ENCODE measurements at regions of chr4 and their contacts with region 1.

Region 1: DNA sequence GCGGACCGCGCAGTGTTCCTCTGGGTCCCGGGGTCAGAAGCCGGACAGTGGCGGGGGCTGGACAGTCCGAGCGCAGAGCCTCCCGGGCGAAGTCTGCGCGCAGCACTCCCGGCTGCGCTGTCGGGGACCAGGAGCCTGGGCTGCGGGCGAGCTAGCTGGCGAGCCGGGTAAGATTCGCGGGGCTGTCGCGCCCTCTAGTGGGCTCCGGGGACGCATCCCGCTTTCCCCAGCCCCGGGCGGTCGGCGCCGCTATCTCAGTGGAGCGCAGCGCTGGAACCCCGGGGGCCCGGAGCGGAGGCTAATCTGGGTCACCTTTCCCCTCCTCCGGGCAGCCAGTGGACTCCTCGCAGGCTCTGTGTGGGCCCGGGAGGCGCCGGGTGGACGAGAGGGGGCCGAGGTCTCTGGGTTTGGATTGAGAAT is 4.2 kb downstream of the PDGFRA start:
- DNase-seq: peak; percentile 77 to 84
- H3K4me3 ChIP-seq: peak overlapping the region in 1 of 3 donors; percentile 47
- H3K27ac ChIP-seq: peak overlapping the region in 2 of 3 donors; percentile 49 to 55
- H3K4me1 ChIP-seq: peaks cover 31 to 46% of the 10 kb centered on the region in 2 donors
- H3K27me3 ChIP-seq: peaks cover 37% of the 10 kb centered on the region
- CTCF ChIP-seq: peak; percentile 53 to 84 (median 75)
- POLR2A ChIP-seq: no peak

Region 2: DNA sequence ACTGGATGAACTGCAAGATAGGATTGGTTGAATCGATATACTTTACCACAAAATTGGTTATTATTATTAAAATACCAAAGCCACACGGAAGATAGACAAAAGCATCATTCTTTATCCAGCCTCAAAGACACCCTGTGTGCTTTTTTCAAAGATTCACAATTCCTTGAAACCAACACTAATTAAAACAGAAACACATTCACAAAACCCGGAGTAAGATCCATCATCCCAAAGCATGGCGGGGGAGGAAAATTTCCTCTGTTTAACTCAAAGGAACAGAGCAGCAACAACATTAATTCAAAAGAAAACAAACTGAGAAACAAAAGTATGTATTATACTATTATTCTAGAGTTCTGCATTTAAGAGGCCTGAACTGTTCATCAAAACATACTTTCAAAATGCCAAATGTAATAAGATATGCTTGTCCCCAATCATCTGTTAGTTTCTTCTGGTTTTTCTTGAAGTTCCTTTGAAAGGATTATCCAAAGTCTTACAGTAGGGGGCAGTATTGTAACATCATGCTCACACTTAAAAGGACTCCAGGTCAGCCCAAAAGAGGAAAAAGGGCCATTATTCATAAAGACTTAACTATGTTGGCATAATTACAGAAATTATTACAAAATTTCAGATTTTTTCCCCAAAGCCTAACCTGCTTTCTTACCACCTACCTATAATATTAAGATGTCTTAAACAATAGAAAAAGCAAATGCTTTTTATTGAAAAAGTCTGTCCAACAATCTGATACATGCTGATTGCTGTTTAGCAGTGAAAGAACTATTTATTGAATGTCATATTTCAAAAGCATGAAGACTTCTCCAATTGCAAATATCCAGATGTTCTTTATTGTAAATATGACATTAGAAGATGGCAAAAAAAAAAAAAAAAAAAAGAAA is 1036.2 kb before region 1 on chr4:
- intact Hi-C with region 1: loop called (anchors 5 kb)
- DNase-seq: no peak
- H3K4me3 ChIP-seq: no peak overlapping the region
- H3K27ac ChIP-seq: no peak overlapping the region
- H3K4me1 ChIP-seq: no peaks in the 10 kb centered on the region
- H3K27me3 ChIP-seq: no peaks in the 10 kb centered on the region
- CTCF ChIP-seq: peak in 5 of 6 experiments; percentile 57 to 80 (median 66)
- POLR2A ChIP-seq: no peak

Region 3: DNA sequence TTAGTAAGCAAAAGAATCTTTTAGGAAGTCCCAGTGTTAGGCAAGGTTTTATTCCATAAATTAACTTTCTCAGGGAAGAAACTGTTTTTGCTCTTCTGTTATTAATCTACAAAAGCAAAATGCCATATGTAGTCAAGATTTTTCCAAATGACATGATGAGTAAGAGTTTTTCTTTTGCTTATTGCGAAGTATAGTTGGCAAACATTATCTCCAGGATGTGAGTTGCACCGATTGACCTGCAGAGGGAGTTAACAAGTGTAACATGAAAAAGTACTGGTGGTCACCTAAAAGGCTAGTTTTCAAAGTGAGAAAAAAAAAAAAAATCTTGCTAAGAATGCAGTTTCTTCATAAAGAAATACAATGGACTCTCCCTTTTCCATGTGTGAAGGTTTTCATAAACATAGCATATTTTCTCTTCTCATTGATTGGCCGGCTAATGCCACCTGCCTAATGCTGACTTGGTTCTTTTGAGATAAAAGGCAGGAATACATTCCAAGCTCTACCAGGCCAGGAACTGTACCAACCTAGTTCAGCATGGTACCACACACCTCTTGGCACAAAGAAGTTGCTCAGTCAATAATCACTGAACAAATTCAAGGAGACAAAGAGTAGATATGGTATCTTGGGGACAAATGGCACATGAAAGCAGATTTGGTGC is 742.2 kb before region 1 on chr4:
- intact Hi-C with region 1: loop called (anchors 5 kb)
- DNase-seq: peak; percentile 57 to 58
- H3K4me3 ChIP-seq: no peak overlapping the region
- H3K27ac ChIP-seq: peak overlapping the region in 1 of 3 donors; percentile 56
- H3K4me1 ChIP-seq: peaks cover 0 to 3% of the 10 kb centered on the region in 2 donors
- H3K27me3 ChIP-seq: no peaks in the 10 kb centered on the region
- CTCF ChIP-seq: peak; percentile 16 to 89 (median 66)
- POLR2A ChIP-seq: no peak

Region 4: GRCh38 chr4:53908661-53909078 is 324.6 kb before region 1 on chr4:
- intact Hi-C with region 1: loop called (anchors 2 kb)
- DNase-seq: peak; percentile 27 to 29
- H3K4me3 ChIP-seq: no peak overlapping the region
- H3K27ac ChIP-seq: no peak overlapping the region
- H3K4me1 ChIP-seq: peaks cover 7 to 18% of the 10 kb centered on the region in 2 donors
- H3K27me3 ChIP-seq: no peaks in the 10 kb centered on the region
- CTCF ChIP-seq: peak in 5 of 6 experiments; percentile 28 to 75 (median 68)
- POLR2A ChIP-seq: no peak

Region 5: GRCh38 chr4:54346445-54346844 is 113.2 kb after region 1 on chr4:
- intact Hi-C with region 1: no loop called
- DNase-seq: no peak
- H3K4me3 ChIP-seq: no peak overlapping the region
- H3K27ac ChIP-seq: no peak overlapping the region
- H3K4me1 ChIP-seq: no peaks in the 10 kb centered on the region
- H3K27me3 ChIP-seq: no peaks in the 10 kb centered on the region
- CTCF ChIP-seq: no peak
- POLR2A ChIP-seq: no peak

Region 6: DNA sequence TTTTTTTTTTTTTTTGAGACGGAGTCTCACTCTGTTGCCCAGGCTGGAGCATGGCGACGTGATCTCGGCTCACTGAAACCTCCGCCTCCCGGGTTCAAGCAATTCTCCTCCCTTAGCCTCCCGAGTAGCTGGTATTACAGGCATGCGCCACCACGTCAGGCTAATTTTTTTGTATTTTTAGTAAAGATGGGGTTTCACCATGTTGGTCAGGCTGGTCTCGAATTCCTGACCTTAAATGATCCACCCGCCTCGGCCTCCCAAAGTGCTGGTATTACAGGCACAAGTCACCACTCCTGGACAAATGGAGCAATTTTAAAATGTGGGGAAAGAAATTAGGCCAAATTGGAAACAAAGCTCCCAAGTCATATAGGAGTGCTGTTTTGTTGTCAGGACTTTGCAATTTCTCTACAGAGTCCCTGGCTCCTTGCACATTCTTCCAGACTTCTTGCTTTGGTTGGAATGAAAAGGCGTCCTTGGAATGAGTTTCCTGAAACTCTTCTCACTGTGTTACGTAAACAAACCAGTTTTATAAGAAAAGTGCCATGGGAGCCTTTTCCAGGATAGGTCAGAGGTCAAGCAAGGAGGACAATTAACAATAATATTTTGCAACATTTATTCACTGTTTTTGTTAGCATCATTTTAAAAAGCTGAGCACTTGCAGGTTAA is 392.0 kb after region 1 on chr4:
- intact Hi-C with region 1: no loop called
- DNase-seq: no peak
- H3K4me3 ChIP-seq: no peak overlapping the region
- H3K27ac ChIP-seq: no peak overlapping the region
- H3K4me1 ChIP-seq: peaks cover 6 to 7% of the 10 kb centered on the region in 2 donors
- H3K27me3 ChIP-seq: no peaks in the 10 kb centered on the region
- CTCF ChIP-seq: no peak
- POLR2A ChIP-seq: no peak

Region 7: GRCh38 chr4:54661686-54662085 is 428.4 kb after region 1 on chr4:
- intact Hi-C with region 1: no loop called
- DNase-seq: no peak
- H3K4me3 ChIP-seq: no peak overlapping the region
- H3K27ac ChIP-seq: no peak overlapping the region
- H3K4me1 ChIP-seq: peaks cover 0 to 42% of the 10 kb centered on the region in 2 donors
- H3K27me3 ChIP-seq: no peaks in the 10 kb centered on the region
- CTCF ChIP-seq: no peak
- POLR2A ChIP-seq: no peak

Measured in thyroid gland (tissue), 4 donors.